ENCODE measurements at regions of chr22 and their contacts with region 1.

Region 1: DNA sequence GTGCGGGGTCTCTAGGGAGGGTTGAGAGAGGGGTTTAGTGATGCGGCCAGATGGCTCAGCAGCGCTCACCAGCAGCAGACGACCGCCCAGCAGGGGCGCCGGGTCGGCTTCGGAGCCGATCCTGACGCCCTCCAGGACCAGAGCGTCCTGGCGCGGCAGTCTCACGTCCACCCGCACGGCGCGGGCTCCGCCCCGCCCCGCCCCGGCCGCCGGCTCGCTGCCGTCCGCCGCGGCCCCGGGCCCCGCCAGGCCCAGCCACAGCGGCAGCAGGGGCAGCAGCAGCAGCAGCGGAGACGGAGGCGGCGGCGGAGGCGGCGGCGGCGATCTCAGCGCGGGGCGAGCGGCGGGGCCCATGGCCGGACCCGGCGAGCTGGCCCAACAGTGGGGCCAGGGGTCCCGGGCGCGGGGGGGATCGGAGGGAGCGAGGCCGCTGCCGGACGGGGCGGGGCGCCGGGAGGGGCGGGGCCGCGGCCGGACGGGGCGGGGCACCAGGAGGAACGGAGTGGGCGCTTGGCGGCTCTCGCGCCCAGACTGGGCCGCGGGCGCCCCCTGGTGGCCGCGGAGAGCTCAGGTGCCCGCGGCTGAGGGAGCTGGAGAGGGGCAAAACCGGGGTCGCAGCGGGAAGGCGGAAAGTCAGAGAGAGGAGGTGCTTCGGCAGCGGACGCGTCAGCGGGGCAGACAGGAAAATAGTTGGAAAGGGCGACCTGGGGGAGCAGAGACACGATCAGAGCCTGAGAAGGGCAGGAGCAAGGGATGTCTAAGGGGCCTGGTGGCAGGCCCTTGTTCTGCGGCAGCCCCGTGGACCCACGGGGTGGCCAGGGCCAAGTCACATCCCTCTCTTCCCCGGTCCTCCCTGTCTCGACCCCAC is at the start of gene RNF215:
- DNase-seq: peak; percentile 88
- H3K4me3 ChIP-seq: peak within 1 kb of the TSS; percentile 51 to 70 (median 59)
- H3K27ac ChIP-seq: peak within 1 kb of the TSS; percentile 71 to 85 (median 76)
- H3K4me1 ChIP-seq: peaks cover 6 to 14% (median 11%) of the 10 kb centered on the region in 4 donors
- H3K27me3 ChIP-seq: no peaks in the 10 kb centered on the region
- CTCF ChIP-seq: peak; percentile 90 to 96 (median 92)
- EP300 ChIP-seq: no peak
- POLR2A ChIP-seq: no peak
- total RNA-seq, gene RNF215: 3.2 to 65.5 (median 9.8) TPM

Region 2: DNA sequence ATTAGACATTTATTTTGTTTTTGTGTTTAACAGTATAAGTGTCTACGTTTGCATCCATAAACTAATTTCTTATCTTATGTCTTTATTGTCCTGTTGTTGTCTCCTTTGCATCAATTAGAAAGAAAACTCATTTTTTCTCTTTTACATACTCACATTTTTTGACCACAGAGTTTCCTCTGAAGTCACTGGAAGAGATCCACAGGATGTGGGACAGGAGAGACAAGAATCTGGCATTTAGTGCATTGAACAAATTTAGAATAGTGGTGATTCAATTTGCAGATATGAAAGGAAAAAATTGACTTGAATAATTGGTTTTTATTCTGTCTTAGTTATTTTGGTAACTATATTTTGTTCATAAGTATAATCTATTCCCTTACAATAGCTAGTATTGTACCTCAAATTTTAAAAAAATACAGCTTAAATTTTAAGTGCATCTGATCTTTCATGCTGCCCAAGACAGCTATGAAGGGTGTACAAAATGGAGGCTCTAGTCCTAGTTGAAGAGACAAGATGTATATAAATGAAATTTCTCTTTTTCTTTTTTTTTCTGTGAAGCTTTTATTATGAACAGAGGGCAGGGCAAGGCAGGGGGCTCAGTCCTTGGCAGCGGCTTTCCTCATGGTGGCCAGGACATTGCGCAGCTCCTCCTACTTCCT is 282.6 kb before region 1 on chr22:
- in situ Hi-C with region 1: loop called in 3 of 4 experiments (anchors 10 to 25 kb)
- intact Hi-C with region 1: loop called (anchors 10 kb)
- DNase-seq: no peak
- H3K4me3 ChIP-seq: no peak overlapping the region
- H3K27ac ChIP-seq: no peak overlapping the region
- H3K4me1 ChIP-seq: peaks cover 0 to 3% (median 0%) of the 10 kb centered on the region in 4 donors
- H3K27me3 ChIP-seq: peaks cover 5% of the 10 kb centered on the region
- CTCF ChIP-seq: no peak
- EP300 ChIP-seq: no peak
- POLR2A ChIP-seq: no peak

Region 3: DNA sequence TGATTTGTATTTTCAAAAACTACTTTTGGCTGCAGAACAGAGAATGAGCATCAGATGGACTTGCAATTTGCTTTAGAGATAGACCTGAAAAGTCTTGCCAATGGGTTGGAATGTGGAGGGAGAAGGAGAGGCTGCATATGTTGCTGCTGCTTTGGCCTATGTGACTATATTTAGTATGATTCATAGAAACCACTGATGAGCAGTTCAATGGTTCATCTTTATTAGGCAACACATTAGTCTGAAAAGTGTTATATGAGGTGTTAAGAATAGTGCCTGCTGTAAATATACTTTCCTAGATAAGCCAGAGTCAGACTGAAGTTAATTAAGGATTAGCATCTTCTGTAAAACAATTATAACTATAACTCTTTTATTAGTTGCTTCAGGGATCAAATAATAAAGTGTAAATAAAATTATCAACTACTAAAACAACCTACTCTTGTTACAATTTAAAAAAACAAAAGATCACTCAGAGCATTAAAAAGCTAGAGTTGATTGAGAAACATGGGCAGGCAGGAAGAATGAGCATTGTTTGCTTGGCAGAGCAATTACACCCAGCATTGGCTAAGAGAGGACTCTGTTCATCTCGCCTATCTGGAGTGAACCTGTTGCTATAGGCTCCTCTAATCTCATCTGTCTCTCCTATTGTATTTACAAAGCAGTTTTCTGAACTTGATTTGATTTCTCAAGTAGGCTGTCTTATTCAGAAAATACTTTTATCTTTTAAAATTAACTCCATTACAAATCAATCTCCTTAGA is 270.7 kb before region 1 on chr22:
- in situ Hi-C with region 1: loop called in 2 of 4 experiments (anchors 25 kb)
- intact Hi-C with region 1: no loop called
- DNase-seq: no peak
- H3K4me3 ChIP-seq: no peak overlapping the region
- H3K27ac ChIP-seq: no peak overlapping the region
- H3K4me1 ChIP-seq: no peaks in the 10 kb centered on the region
- H3K27me3 ChIP-seq: no peaks in the 10 kb centered on the region
- CTCF ChIP-seq: no peak
- EP300 ChIP-seq: no peak
- POLR2A ChIP-seq: no peak

Region 4: DNA sequence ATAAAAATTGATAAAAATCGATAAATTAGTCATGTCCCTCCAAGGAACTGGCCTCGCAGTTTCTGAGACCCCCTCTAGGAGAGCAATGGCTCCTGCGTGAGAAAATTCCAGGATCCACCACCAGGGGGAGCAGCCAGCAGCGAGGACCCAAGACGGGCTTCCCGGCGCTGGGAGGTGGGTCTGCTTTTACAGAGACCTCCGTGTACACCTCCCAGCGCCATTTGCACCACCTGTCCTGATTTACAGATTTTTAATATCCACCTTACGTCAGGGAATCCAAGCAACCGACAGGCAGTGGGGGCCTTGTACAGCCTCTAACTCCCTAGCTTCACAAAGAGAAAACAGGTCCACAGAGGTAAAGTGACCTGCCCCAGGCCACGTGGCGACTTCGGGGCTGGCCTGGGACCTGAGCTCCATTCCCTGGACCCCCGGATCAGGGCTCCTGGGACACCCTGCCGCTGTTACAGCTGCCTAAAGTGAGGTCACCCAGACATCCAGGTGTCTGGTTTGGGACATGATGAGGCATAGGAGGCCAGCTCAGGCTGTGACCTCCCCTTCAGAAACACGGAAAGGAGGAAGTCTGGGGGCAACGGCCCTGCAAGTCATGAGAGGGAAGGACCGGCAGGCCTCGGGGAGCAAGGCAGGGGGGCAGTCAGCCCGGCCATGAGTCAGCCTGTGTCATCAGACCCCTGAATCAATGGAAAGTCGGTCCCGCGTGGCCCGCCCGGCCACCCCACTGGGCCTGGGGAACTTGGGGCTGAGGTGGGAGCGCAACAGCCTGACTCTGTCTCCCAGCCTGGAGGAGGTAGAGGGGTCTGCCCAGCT is 124.1 kb before region 1 on chr22:
- in situ Hi-C with region 1: loop called in 2 of 4 experiments (anchors 10 kb)
- intact Hi-C with region 1: loop called (anchors 2 kb)
- DNase-seq: peak; percentile 81
- H3K4me3 ChIP-seq: peak overlapping the region in 1 of 4 donors; percentile 38
- H3K27ac ChIP-seq: no peak overlapping the region
- H3K4me1 ChIP-seq: peaks cover 0 to 17% (median 4%) of the 10 kb centered on the region in 4 donors
- H3K27me3 ChIP-seq: no peaks in the 10 kb centered on the region
- CTCF ChIP-seq: peak; percentile 97 to 100 (median 99)
- EP300 ChIP-seq: no peak
- POLR2A ChIP-seq: no peak

Region 5: GRCh38 chr22:30289134-30289979 is 97.8 kb before region 1 on chr22 and contains the start of gene CASTOR1:
- in situ Hi-C with region 1: loop called in 2 of 4 experiments (anchors 10 to 25 kb)
- intact Hi-C with region 1: loop called (anchors 1 kb)
- DNase-seq: peak; percentile 99
- H3K4me3 ChIP-seq: peak within 1 kb of the TSS; percentile 55 to 81 (median 78)
- H3K27ac ChIP-seq: peak within 1 kb of the TSS; percentile 89 to 93 (median 90)
- H3K4me1 ChIP-seq: peaks cover 27 to 41% (median 34%) of the 10 kb centered on the region in 4 donors
- H3K27me3 ChIP-seq: no peaks in the 10 kb centered on the region
- CTCF ChIP-seq: no peak
- EP300 ChIP-seq: no peak
- POLR2A ChIP-seq: peak; percentile 59
- total RNA-seq, gene CASTOR1: 5.6 to 6.8 TPM in 2 of 4 donors, not detected in the others

Region 6: DNA sequence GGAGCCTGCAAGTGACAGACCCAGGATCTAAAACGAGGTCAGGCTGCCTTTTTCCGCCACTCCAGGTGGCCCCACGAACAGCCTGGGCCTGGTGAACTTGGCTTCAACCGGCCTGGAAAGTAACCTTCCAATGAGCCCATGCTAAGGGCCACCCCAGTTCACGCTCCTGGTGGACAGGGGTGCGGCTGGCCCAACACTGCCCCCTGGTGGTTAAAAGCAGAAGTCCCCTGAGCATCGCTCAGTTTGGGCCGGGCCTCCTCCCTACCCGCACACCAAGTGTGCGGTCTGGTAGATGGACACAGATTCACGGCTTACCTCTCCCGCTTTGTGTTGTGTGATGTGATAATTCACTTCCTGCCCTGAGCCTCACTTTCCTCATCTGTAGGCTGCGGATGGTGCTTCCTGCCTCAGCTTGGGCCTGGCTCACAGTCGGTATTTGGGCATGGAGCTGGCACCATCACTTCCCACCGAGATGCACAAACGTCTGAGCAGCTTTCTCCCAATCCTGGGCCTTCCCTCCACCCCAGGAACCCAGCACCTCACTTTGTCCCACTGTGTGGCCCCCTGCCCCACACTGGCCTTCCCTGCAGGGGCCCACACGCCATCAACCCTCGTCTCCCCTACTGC is 98.3 kb after region 1 on chr22:
- in situ Hi-C with region 1: loop called in 3 of 4 experiments (anchors 5 to 25 kb)
- intact Hi-C with region 1: loop called (anchors 2 kb)
- DNase-seq: peak; percentile 72
- H3K4me3 ChIP-seq: no peak overlapping the region
- H3K27ac ChIP-seq: no peak overlapping the region
- H3K4me1 ChIP-seq: no peaks in the 10 kb centered on the region
- H3K27me3 ChIP-seq: no peaks in the 10 kb centered on the region
- CTCF ChIP-seq: peak; percentile 95 to 98 (median 95)
- EP300 ChIP-seq: no peak
- POLR2A ChIP-seq: no peak